Naive thymus-derived CD4-positive, alpha-beta T cell (primary cell): ENCODE measurements at regions of chr3 and their contacts with region 1.

Region 1: GRCh38 chr3:152376351-152377183 is 107.8 kb downstream of the MBNL1 start:
- DNase-seq: no peak
- ATAC-seq: peak; percentile 81
- H3K4me3 ChIP-seq: no peak overlapping the region
- H3K4me3 Mint-ChIP-seq: peak overlapping the region; percentile 2 to 68 (median 24)
- H3K27ac ChIP-seq: peak overlapping the region; percentile 32
- H3K27ac Mint-ChIP-seq: peak overlapping the region; percentile 1 to 87 (median 71)
- H3K4me1 ChIP-seq: peaks cover 29 to 37% of the 10 kb centered on the region in 2 donors
- H3K4me1 Mint-ChIP-seq: peaks cover 51 to 98% (median 83%) of the 10 kb centered on the region in 7 donors
- H3K27me3 ChIP-seq: no peaks in the 10 kb centered on the region
- H3K27me3 Mint-ChIP-seq: no peaks in the 10 kb centered on the region

Region 2: GRCh38 chr3:152328841-152329240 is 47.7 kb before region 1 on chr3:
- CTCF ChIA-PET with region 1: no interaction called
- POLR2A ChIA-PET with region 1: no interaction called
- intact Hi-C with region 1: no loop called
- DNase-seq: no peak
- ATAC-seq: no peak
- H3K4me3 ChIP-seq: no peak overlapping the region
- H3K4me3 Mint-ChIP-seq: peak overlapping the region in 8 of 10 donors; percentile 9 to 78 (median 46)
- H3K27ac ChIP-seq: peak overlapping the region; percentile 51
- H3K27ac Mint-ChIP-seq: peak overlapping the region; percentile 44 to 85 (median 76)
- H3K4me1 ChIP-seq: peaks cover 38 to 70% of the 10 kb centered on the region in 2 donors
- H3K4me1 Mint-ChIP-seq: peaks cover 63 to 96% (median 91%) of the 10 kb centered on the region in 7 donors
- H3K27me3 ChIP-seq: no peaks in the 10 kb centered on the region
- H3K27me3 Mint-ChIP-seq: no peaks in the 10 kb centered on the region

Region 3: DNA sequence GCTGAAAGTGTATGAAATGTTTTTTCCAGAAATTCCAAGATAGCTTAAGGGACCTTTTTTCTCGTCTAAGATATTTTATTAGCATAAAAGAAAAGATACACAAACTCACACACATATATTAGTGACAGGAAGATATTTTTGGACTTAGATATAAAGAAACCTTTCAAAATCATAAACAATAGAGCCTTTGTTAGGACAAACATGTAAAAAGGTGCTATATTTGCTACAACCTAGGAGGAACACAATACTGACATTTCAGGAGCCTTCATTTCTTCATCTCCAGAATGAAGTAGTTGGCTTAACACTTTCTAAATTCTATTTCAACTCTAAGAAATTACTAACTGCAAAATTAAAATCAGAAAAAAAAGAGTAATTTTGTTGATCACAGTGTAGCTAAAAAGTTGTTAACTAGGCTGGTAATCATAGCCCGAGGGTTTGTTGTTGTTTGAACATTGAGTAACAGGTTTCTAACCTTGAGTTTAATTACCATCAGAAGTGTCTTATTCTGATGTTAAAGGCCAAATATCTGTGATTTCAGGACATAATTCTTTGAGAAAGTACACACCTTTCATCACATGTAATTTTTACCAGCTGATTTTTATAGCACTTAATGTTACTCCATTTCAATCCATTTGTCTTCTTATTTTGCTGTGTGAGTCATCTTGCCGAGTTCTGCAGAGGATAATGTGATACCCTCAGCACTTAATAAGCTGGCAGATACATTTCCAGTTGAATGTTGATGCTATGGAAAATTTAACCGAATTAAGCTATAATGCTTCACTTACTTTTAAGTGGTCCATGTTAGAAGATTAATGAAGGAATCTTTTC is 10.6 kb before region 1 on chr3:
- CTCF ChIA-PET with region 1: no interaction called
- POLR2A ChIA-PET with region 1: interaction called, 5 read pairs
- intact Hi-C with region 1: loop called in 1 of 2 experiments (anchors 1 kb)
- DNase-seq: no peak
- ATAC-seq: no peak
- H3K4me3 ChIP-seq: no peak overlapping the region
- H3K4me3 Mint-ChIP-seq: peak overlapping the region in 2 of 10 donors; percentile 32 to 64
- H3K27ac ChIP-seq: peak overlapping the region; percentile 10
- H3K27ac Mint-ChIP-seq: peak overlapping the region in 4 of 9 donors; percentile 17 to 72 (median 34)
- H3K4me1 ChIP-seq: peaks cover 8 to 24% of the 10 kb centered on the region in 2 donors
- H3K4me1 Mint-ChIP-seq: peaks cover 50 to 89% (median 82%) of the 10 kb centered on the region in 7 donors
- H3K27me3 ChIP-seq: no peaks in the 10 kb centered on the region
- H3K27me3 Mint-ChIP-seq: no peaks in the 10 kb centered on the region

Region 4: GRCh38 chr3:152392272-152392880 is 15.8 kb after region 1 on chr3:
- CTCF ChIA-PET with region 1: interaction called, 3 read pairs
- POLR2A ChIA-PET with region 1: interaction called, 3 read pairs
- intact Hi-C with region 1: loop called in 1 of 2 experiments (anchors 2 kb)
- DNase-seq: no peak
- ATAC-seq: no peak
- H3K4me3 ChIP-seq: no peak overlapping the region
- H3K4me3 Mint-ChIP-seq: peak overlapping the region in 2 of 10 donors; percentile 19 to 56
- H3K27ac ChIP-seq: peak overlapping the region; percentile 6
- H3K27ac Mint-ChIP-seq: peak overlapping the region in 7 of 9 donors; percentile 25 to 87 (median 73)
- H3K4me1 ChIP-seq: peaks cover 6 to 15% of the 10 kb centered on the region in 2 donors
- H3K4me1 Mint-ChIP-seq: peaks cover 22 to 89% (median 82%) of the 10 kb centered on the region in 7 donors
- H3K27me3 ChIP-seq: no peaks in the 10 kb centered on the region
- H3K27me3 Mint-ChIP-seq: no peaks in the 10 kb centered on the region